SK-N-SH (cell line): ENCODE measurements at regions of chr1 and their contacts with region 1.

Region 1: DNA sequence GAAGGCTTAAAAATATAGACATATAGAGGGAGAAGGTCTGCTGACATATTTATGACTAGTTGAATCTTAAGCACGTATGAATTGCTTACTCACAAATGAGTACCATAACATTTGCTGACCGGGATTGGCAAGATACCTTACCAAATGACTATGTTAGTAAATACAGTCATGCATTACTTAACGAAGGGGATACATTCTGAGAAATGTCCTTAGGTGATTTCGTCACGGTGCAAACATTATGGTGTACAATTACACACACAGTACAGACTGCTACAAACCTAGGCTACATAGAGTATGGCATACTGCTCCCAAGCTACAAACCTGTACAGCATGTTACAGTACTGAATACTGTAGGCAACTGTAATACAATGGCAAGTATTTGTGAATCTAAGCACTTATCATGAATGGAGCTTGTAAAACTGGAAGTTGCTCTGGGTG is 19.4 kb upstream of the UBE2U start:
- DNase-seq: no peak
- H3K4me3 ChIP-seq: no peak overlapping the region
- H3K27ac ChIP-seq: peak overlapping the region in 1 of 2 experiments; percentile 91; a peak in 2 of 4 replicates
- H3K4me1 ChIP-seq: peaks cover 0 to 11% of the 10 kb centered on the region in 2 experiments; a peak in 3 of 4 replicates
- H3K27me3 ChIP-seq: no peaks in the 10 kb centered on the region
- CTCF ChIP-seq: no peak
- EP300 ChIP-seq: no peak
- RAD21 ChIP-seq: no peak

Region 2: DNA sequence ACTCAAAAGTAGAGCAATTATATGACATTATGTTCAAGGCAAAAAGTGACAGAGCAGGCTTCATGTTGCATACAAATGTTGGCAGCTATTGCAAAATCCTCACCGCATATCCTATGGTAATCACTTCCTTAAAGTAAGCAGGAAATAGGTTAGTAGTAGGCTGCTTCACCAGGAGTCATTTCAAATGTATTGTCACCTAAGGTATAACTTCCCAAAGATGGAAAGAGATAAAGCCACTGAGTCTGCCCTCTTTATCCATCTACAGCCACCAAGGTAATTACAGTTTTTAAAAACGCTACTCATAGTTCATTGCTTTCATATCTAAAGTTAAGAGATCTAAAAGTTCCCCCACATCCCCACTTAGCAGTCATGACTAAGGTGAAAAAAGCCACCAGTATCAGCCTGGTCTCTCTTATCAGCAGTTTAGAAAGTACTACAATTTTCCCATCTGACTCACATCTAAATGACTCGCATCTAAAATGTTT is 12.2 kb before region 1 on chr1:
- CTCF ChIA-PET with region 1: interaction called, 4 read pairs
- POLR2A ChIA-PET with region 1: interaction called, 11 read pairs
- DNase-seq: no peak
- H3K4me3 ChIP-seq: peak overlapping the region in 1 of 2 experiments; percentile 14; a peak in 3 of 4 replicates
- H3K27ac ChIP-seq: peak overlapping the region; percentile 91 to 100
- H3K4me1 ChIP-seq: peaks cover 33 to 46% of the 10 kb centered on the region in 2 experiments
- H3K27me3 ChIP-seq: no peaks in the 10 kb centered on the region
- CTCF ChIP-seq: no peak
- EP300 ChIP-seq: no peak
- RAD21 ChIP-seq: peak; percentile 33

Region 3: DNA sequence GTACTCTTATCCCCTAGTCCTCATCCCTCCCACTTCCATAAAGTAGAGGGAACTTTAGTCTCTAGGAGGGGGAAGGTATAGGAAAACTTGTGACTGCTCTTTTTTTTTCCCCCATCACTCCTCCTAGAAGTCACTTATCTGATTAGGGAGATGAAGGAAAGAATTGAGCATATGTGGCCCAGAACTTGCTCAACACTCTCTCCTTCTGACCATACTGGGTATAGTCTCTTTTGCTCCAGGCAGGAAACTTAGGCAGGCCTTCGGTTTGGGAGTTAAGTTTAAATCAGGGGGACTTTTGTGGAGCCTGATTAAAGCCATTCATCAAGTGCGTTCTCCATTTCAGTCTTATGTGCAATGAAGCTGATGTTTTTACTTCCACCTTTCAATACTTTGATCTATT is 25.2 kb after region 1 on chr1:
- CTCF ChIA-PET with region 1: no interaction called
- POLR2A ChIA-PET with region 1: no interaction called
- DNase-seq: no peak
- H3K4me3 ChIP-seq: no peak overlapping the region
- H3K27ac ChIP-seq: no peak overlapping the region
- H3K4me1 ChIP-seq: no peaks in the 10 kb centered on the region
- H3K27me3 ChIP-seq: no peaks in the 10 kb centered on the region
- CTCF ChIP-seq: no peak
- EP300 ChIP-seq: no peak
- RAD21 ChIP-seq: no peak